GM12878 (cell line): ENCODE measurements at regions of chr15 and their contacts with region 1.

Region 1: DNA sequence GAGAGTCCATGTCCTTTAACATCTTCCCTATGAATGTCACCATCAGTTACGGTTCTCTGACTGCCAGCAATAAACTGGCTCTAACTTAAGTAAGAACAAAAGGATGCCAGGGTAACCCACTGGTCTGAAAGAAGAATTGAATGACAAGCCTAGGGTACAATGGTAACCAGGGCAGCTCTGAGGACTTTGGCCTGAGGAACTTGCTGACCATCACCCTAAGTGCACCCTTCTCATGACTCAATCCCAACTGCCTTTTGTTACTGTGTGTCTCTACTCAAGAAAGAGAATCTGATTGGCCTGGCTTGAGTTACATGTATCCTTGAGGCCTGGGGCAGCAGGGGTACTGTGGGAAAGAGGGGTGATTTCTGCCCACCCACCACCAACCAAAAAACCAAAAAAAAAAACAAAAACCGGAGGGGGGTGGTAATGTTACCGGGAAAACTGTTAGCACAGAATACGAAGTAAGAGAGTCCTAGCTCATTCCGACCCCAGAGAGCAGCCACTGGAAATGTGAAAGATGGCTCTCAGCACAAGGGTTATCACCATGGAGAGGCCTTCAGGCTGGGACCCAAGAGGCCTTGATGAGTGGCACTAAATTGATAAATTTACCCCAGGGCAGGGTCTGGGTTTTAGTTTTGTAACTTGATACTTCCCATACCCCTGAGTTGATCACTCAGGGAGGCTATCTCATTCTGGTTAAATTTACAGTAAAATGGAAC is 9.3 kb upstream of the SLC28A1 start:
- DNase-seq: no peak
- ATAC-seq: no peak
- H3K4me3 ChIP-seq: no peak overlapping the region
- H3K27ac ChIP-seq: no peak overlapping the region
- H3K4me1 ChIP-seq: no peaks in the 10 kb centered on the region
- H3K27me3 ChIP-seq: no peaks in the 10 kb centered on the region; a peak in 1 of 4 replicates
- CTCF ChIP-seq: no peak
- EP300 ChIP-seq: no peak
- POLR2A ChIP-seq: no peak
- RAD21 ChIP-seq: no peak

Region 2: DNA sequence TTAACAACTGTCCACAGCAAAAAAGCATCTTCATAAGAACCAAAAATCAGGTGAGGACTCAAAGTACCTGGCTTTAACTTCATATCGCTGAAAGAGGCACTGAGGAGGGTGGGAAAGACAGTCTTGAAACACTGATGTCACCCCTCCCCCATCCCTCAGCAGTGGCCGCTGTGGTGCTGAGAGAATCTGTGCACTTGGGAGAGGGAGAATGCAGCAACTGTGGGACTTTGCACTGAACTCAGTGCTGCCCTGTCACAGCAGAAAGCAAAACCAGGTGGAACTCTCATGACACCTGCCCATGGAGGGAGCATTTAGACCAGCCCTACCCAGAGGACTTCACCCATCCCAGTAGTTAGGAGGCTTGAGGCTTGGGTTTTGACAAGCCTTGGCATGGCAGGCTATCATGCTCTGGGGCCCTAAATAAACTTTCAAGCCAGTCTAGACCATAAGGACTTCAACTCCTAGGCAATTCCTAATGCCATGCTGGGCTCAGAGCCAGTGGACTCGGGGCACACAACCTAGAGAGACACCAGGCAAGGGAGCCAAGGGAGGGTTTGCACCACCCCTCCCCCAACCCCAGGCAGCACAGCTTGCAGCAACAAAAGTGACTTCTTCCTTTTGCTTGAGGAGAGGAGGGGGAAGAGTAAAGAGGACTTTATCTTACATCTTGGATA is 280.4 kb before region 1 on chr15:
- CTCF ChIA-PET with region 1: interaction called, 42 read pairs
- POLR2A ChIA-PET with region 1: no interaction called
- RAD21 ChIA-PET with region 1: interaction called, 12 read pairs
- SMC1A ChIA-PET with region 1: interaction called, 13 read pairs
- in situ Hi-C with region 1: loop called (anchors 5 kb)
- intact Hi-C with region 1: loop called (anchors 2 kb)
- DNase-seq: no peak
- ATAC-seq: no peak
- H3K4me3 ChIP-seq: no peak overlapping the region
- H3K27ac ChIP-seq: no peak overlapping the region
- H3K4me1 ChIP-seq: peaks cover 15% of the 10 kb centered on the region
- H3K27me3 ChIP-seq: peaks cover 2% of the 10 kb centered on the region in 2 experiments; a peak in 2 of 4 replicates
- CTCF ChIP-seq: no peak
- EP300 ChIP-seq: no peak
- POLR2A ChIP-seq: no peak
- RAD21 ChIP-seq: no peak

Region 3: GRCh38 chr15:84863565-84864443 is 11.3 kb before region 1 on chr15:
- CTCF ChIA-PET with region 1: interaction called, 12 read pairs
- POLR2A ChIA-PET with region 1: no interaction called
- RAD21 ChIA-PET with region 1: interaction called, 8 read pairs
- SMC1A ChIA-PET with region 1: interaction called, 11 read pairs
- in situ Hi-C with region 1: no loop called
- intact Hi-C with region 1: no loop called
- DNase-seq: no peak
- ATAC-seq: no peak
- H3K4me3 ChIP-seq: no peak overlapping the region
- H3K27ac ChIP-seq: no peak overlapping the region
- H3K4me1 ChIP-seq: no peaks in the 10 kb centered on the region
- H3K27me3 ChIP-seq: peaks cover 0 to 4% of the 10 kb centered on the region in 2 experiments; a peak in 3 of 4 replicates
- CTCF ChIP-seq: no peak
- EP300 ChIP-seq: no peak
- POLR2A ChIP-seq: no peak
- RAD21 ChIP-seq: no peak